Breast epithelium (tissue), 4 donors: ENCODE measurements at regions of chr11 and their contacts with region 1.

Region 1: GRCh38 chr11:102783720-102784119 is 3.3 kb upstream of the MMP10 start:
- DNase-seq: no peak
- H3K4me3 ChIP-seq: no peak overlapping the region
- H3K27ac ChIP-seq: no peak overlapping the region
- H3K4me1 ChIP-seq: no peaks in the 10 kb centered on the region
- H3K27me3 ChIP-seq: no peaks in the 10 kb centered on the region
- CTCF ChIP-seq: no peak
- POLR2A ChIP-seq: no peak

Region 2: DNA sequence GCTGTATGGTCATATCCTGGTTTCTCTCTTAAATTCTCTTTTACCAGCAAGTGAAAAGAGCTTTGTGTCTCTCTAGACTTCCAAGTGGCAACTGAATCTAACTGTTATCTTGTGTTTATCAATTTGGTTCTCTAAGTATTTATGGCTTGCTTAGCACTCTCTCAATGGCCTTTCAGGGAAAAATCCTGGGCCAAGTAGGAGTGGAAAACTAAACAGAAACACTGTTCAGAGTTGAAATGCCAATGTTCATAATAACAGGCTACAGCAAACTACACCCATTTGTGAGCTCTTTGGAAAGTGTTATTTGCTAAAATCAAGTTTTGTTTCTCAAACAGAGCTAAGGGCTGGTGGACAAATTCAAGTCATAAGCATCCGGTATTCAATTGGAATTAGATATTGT is 81.0 kb after region 1 on chr11:
- intact Hi-C with region 1: loop called (anchors 2 kb)
- DNase-seq: no peak
- H3K4me3 ChIP-seq: no peak overlapping the region
- H3K27ac ChIP-seq: no peak overlapping the region
- H3K4me1 ChIP-seq: no peaks in the 10 kb centered on the region
- H3K27me3 ChIP-seq: no peaks in the 10 kb centered on the region
- CTCF ChIP-seq: no peak
- POLR2A ChIP-seq: no peak